Uterus (tissue), 4 donors: ENCODE measurements at regions of chr1 and their contacts with region 1.

Region 1: GRCh38 chr1:159510229-159510541 is 25.6 kb downstream of the OR10J5 start:
- DNase-seq: no peak
- H3K4me3 ChIP-seq: no peak overlapping the region
- H3K27ac ChIP-seq: no peak overlapping the region
- H3K4me1 ChIP-seq: no peaks in the 10 kb centered on the region
- H3K27me3 ChIP-seq: no peaks in the 10 kb centered on the region
- CTCF ChIP-seq: no peak
- POLR2A ChIP-seq: no peak

Region 2: GRCh38 chr1:159492575-159493323 is 17.4 kb before region 1 on chr1:
- intact Hi-C with region 1: loop called (anchors 2 kb)
- DNase-seq: no peak
- H3K4me3 ChIP-seq: no peak overlapping the region
- H3K27ac ChIP-seq: no peak overlapping the region
- H3K4me1 ChIP-seq: no peaks in the 10 kb centered on the region
- H3K27me3 ChIP-seq: no peaks in the 10 kb centered on the region
- CTCF ChIP-seq: no peak
- POLR2A ChIP-seq: no peak